MCF 10A (cell line): ENCODE measurements at regions of chr6 and their contacts with region 1.

Region 1: GRCh38 chr6:77620278-77620882 is 32.5 kb upstream of the MEI4 start:
- DNase-seq: peak; percentile 57
- H3K4me3 Mint-ChIP-seq: no peak overlapping the region
- H3K27ac Mint-ChIP-seq: no peak overlapping the region
- H3K4me1 Mint-ChIP-seq: no peaks in the 10 kb centered on the region
- H3K27me3 Mint-ChIP-seq: no peaks in the 10 kb centered on the region
- CTCF ChIP-seq: peak; percentile 53

Region 2: GRCh38 chr6:77638129-77638830 is 17.9 kb after region 1 on chr6:
- CTCF ChIA-PET with region 1: interaction called, 11 read pairs
- POLR2A ChIA-PET with region 1: no interaction called
- intact Hi-C with region 1: no loop called
- DNase-seq: peak; percentile 73
- H3K4me3 Mint-ChIP-seq: no peak overlapping the region
- H3K27ac Mint-ChIP-seq: no peak overlapping the region
- H3K4me1 Mint-ChIP-seq: peaks cover 5% of the 10 kb centered on the region
- H3K27me3 Mint-ChIP-seq: no peaks in the 10 kb centered on the region
- CTCF ChIP-seq: no peak

Region 3: GRCh38 chr6:77926198-77926752 is 305.9 kb after region 1 on chr6:
- CTCF ChIA-PET with region 1: interaction called, 7 read pairs
- POLR2A ChIA-PET with region 1: no interaction called
- intact Hi-C with region 1: loop called (anchors 5 kb)
- DNase-seq: peak; percentile 42
- H3K4me3 Mint-ChIP-seq: no peak overlapping the region
- H3K27ac Mint-ChIP-seq: no peak overlapping the region
- H3K4me1 Mint-ChIP-seq: no peaks in the 10 kb centered on the region
- H3K27me3 Mint-ChIP-seq: no peaks in the 10 kb centered on the region
- CTCF ChIP-seq: peak; percentile 20